Heart left ventricle (tissue), 16 donors: ENCODE measurements at regions of chr5 and their contacts with region 1.

Region 1: DNA sequence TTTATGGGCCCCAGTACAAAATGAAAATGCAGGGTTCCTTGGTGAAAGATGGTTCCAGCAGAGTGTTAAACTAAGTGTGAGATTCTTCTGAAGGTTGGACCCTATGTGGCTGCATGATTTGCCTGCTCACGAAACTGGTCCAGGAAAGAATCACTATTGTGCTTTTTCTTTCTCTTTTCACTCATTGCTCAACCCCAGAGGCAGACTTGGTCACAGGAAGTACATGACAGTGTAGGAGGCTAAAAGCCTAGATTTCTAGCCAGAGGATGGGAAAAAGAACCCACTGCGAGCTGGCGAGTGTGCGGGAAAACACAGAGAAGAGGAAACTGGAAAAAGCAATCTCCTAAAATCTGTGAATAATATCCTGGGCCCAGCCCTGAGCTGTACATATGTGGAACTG is 18.6 kb downstream of the SLC36A2 start:
- DNase-seq: no peak
- ATAC-seq: no peak
- H3K4me3 ChIP-seq: no peak overlapping the region
- H3K27ac ChIP-seq: no peak overlapping the region
- H3K4me1 ChIP-seq: peaks cover 0 to 13% (median 0%) of the 10 kb centered on the region in 12 donors
- H3K27me3 ChIP-seq: no peaks in the 10 kb centered on the region
- CTCF ChIP-seq: no peak
- POLR2A ChIP-seq: no peak

Region 2: GRCh38 chr5:151492729-151493128 is 164.0 kb after region 1 on chr5:
- intact Hi-C with region 1: loop called in 1 of 10 experiments (anchors 10 kb)
- DNase-seq: no peak
- ATAC-seq: peak in 3 of 4 donors; percentile 55 to 69 (median 58)
- H3K4me3 ChIP-seq: no peak overlapping the region
- H3K27ac ChIP-seq: peak overlapping the region in 1 of 12 donors; percentile 79
- H3K4me1 ChIP-seq: peaks cover 0 to 31% (median 0%) of the 10 kb centered on the region in 12 donors
- H3K27me3 ChIP-seq: no peaks in the 10 kb centered on the region
- CTCF ChIP-seq: no peak
- POLR2A ChIP-seq: no peak